B cell (primary cell): ENCODE measurements at regions of chr3 and their contacts with region 1.

Region 1: DNA sequence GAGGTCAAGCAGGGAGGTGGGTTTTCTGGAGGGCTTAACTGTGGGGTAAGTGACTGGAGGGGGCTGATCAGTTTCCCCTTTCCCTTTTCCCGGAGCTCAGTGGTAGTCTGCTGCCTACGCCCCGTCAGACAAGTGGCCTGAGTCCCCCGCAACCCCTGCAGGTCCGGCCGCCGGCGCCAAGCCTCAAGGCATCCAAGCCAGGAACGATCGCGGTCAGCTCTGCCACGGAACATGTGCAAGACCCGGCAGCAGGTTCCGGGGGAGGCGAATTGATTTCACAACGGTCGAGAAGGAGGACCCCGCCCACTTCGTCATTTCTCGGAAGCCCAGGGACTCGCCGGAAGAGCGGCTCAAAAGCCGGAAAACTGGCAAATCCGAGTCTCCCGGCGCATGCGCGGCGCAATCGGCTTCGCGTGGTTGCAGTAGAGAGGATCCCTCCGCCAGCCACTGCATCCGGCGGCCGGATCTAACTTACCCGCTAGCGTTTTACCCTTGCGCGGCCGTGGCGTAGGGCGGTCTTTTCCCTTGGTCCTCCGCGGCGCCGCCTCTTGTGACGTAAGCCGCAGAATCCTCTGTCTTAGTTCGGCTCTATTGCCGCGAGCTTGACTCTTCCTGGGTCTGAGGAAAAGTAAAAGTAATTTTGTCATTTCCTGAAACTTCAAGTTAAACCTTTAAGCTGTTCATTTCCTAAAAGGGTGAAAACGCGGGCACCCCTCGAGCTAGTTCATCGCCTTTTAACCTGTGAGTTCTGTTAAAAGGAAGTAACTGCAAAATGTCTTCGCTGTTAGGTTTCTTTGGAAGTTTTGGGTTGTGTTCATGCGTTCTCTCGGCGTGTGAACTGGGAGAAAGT is 14.9 kb upstream of the CCNL1 start:
- DNase-seq: peak; percentile 99
- ATAC-seq: peak; percentile 91
- H3K4me3 ChIP-seq: peak overlapping the region; percentile 85 to 98 (median 93)
- H3K4me3 Mint-ChIP-seq: peak overlapping the region; percentile 91
- H3K27ac ChIP-seq: peak overlapping the region; percentile 89 to 97
- H3K27ac Mint-ChIP-seq: peak overlapping the region; percentile 97
- H3K4me1 ChIP-seq: peaks cover 19% of the 10 kb centered on the region in 2 donors
- H3K4me1 Mint-ChIP-seq: peaks cover 23% of the 10 kb centered on the region
- H3K27me3 ChIP-seq: no peaks in the 10 kb centered on the region
- H3K27me3 Mint-ChIP-seq: no peaks in the 10 kb centered on the region
- CTCF ChIP-seq: no peak

Region 2: DNA sequence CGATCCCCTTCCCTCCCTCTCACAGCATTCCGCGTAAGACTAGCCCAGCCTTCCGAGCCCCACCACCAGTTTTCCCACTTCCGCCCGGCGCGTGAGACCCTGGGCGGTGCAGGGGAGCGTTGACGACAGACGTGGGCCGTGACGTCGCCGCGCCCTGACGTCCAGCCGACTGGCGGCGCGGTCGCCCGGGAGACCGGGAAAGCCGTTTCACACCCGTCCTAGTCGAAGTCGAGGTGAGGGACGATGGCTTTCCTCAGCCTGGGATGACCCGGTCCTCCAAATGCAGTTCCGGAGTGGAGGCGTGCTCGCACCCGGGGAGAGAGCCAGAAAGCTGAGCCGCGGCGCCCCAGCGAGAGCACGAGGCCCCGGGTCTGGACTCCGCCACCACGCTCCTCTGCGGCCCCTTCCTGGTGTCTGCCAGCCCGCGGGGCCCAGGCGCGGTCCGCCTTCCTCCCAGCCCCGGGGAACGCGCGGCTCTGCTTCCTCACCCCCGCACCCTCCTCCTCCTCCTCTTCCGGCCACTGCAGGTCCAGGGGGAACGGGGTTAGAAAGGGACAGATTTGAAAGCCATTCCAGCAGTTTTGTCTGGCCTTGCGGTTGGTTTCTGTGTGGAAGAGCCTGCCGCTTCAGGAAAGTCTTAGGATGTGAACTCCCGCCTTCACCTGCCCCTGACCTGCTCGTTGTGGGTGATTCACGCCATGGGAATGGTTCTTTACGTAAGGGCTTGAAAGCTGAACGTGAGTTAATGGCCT is 348.6 kb before region 1 on chr3 and contains the start of gene LEKR1:
- CTCF ChIA-PET with region 1: no interaction called
- POLR2A ChIA-PET with region 1: no interaction called
- intact Hi-C with region 1: loop called (anchors 1 kb)
- DNase-seq: peak; percentile 80
- ATAC-seq: peak; percentile 73
- H3K4me3 ChIP-seq: peak within 1 kb of the TSS; percentile 72 to 87 (median 77)
- H3K4me3 Mint-ChIP-seq: peak within 1 kb of the TSS; percentile 93
- H3K27ac ChIP-seq: peak within 1 kb of the TSS; percentile 82 to 97
- H3K27ac Mint-ChIP-seq: peak within 1 kb of the TSS; percentile 96
- H3K4me1 ChIP-seq: peaks cover 12 to 14% of the 10 kb centered on the region in 2 donors
- H3K4me1 Mint-ChIP-seq: peaks cover 24% of the 10 kb centered on the region
- H3K27me3 ChIP-seq: no peaks in the 10 kb centered on the region
- H3K27me3 Mint-ChIP-seq: no peaks in the 10 kb centered on the region
- CTCF ChIP-seq: no peak
- total RNA-seq, gene LEKR1: 4.6 and 4.7 TPM in 2 replicates

Region 3: DNA sequence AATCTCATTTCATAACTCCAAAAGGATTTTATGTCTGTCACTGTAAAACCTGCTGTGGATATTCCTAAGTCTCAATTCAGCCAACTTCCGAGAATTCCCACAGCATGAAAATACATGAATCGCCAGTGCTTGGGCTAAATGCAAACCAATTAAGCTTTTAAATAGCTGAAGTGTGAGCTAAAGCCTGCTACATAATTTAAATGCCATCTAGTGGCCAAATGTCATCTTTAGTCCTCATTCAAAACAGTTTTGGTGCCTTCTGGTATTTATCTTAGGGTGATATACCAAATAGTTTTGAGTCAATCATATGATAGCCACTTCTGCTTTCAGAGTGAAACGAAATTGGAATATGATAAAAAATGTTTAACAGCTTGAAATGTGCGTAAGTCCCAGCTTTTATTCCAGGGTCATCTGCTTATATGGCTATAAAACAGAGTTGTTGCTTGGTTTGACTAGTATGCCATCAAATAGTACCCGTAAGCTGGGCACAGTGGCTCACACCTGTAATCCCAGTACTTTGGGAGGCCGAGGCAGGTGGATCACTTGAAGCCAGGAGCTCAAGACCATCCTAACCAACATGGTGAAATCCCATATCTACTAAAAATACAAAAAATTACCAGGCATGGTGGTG is 26.9 kb after region 1 on chr3:
- CTCF ChIA-PET with region 1: interaction called, 12 read pairs
- POLR2A ChIA-PET with region 1: interaction called, 4 read pairs
- intact Hi-C with region 1: loop called (anchors 1 kb)
- DNase-seq: peak; percentile 48
- ATAC-seq: peak; percentile 10
- H3K4me3 ChIP-seq: no peak overlapping the region
- H3K4me3 Mint-ChIP-seq: no peak overlapping the region
- H3K27ac ChIP-seq: no peak overlapping the region
- H3K27ac Mint-ChIP-seq: no peak overlapping the region
- H3K4me1 ChIP-seq: no peaks in the 10 kb centered on the region
- H3K4me1 Mint-ChIP-seq: peaks cover 5% of the 10 kb centered on the region
- H3K27me3 ChIP-seq: no peaks in the 10 kb centered on the region
- H3K27me3 Mint-ChIP-seq: no peaks in the 10 kb centered on the region
- CTCF ChIP-seq: peak; percentile 63